B cell (primary cell): ENCODE measurements at regions of chr11 and their contacts with region 1.

Region 1: GRCh38 chr11:82867495-82868082 is 32.6 kb downstream of the PRCP start:
- DNase-seq: peak; percentile 87
- ATAC-seq: peak; percentile 54
- H3K4me3 ChIP-seq: peak overlapping the region in 2 of 5 experiments; percentile 22 to 33
- H3K4me3 Mint-ChIP-seq: peak overlapping the region; percentile 63
- H3K27ac ChIP-seq: no peak overlapping the region
- H3K27ac Mint-ChIP-seq: peak overlapping the region; percentile 28
- H3K4me1 ChIP-seq: peaks cover 6% of the 10 kb centered on the region in 2 donors
- H3K4me1 Mint-ChIP-seq: peaks cover 9% of the 10 kb centered on the region
- H3K27me3 ChIP-seq: no peaks in the 10 kb centered on the region
- H3K27me3 Mint-ChIP-seq: no peaks in the 10 kb centered on the region
- CTCF ChIP-seq: peak; percentile 92

Region 2: DNA sequence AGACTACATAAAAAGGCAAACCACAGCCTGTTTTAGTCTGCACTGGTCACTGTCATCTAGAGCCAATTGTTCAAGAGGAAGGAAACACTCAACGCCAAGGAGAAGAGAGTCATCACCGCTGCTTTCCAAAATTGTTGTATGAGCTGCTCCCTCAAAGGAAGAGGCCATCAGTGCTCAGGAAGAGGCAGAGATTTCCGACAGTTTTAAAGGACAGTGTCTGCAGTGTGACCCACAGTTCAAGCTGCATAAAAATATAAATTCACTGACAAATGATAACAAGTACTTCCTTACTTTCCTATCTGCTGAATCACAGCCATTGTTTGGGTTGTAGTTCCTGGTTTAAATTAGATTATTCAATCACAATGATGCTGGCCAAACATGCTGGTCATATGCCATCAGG is 16.3 kb after region 1 on chr11:
- CTCF ChIA-PET with region 1: interaction called, 27 read pairs
- POLR2A ChIA-PET with region 1: no interaction called
- intact Hi-C with region 1: no loop called
- DNase-seq: no peak
- ATAC-seq: no peak
- H3K4me3 ChIP-seq: no peak overlapping the region
- H3K4me3 Mint-ChIP-seq: no peak overlapping the region
- H3K27ac ChIP-seq: no peak overlapping the region
- H3K27ac Mint-ChIP-seq: no peak overlapping the region
- H3K4me1 ChIP-seq: peaks cover 8 to 10% of the 10 kb centered on the region in 2 donors
- H3K4me1 Mint-ChIP-seq: peaks cover 16% of the 10 kb centered on the region
- H3K27me3 ChIP-seq: no peaks in the 10 kb centered on the region
- H3K27me3 Mint-ChIP-seq: no peaks in the 10 kb centered on the region
- CTCF ChIP-seq: no peak

Region 3: DNA sequence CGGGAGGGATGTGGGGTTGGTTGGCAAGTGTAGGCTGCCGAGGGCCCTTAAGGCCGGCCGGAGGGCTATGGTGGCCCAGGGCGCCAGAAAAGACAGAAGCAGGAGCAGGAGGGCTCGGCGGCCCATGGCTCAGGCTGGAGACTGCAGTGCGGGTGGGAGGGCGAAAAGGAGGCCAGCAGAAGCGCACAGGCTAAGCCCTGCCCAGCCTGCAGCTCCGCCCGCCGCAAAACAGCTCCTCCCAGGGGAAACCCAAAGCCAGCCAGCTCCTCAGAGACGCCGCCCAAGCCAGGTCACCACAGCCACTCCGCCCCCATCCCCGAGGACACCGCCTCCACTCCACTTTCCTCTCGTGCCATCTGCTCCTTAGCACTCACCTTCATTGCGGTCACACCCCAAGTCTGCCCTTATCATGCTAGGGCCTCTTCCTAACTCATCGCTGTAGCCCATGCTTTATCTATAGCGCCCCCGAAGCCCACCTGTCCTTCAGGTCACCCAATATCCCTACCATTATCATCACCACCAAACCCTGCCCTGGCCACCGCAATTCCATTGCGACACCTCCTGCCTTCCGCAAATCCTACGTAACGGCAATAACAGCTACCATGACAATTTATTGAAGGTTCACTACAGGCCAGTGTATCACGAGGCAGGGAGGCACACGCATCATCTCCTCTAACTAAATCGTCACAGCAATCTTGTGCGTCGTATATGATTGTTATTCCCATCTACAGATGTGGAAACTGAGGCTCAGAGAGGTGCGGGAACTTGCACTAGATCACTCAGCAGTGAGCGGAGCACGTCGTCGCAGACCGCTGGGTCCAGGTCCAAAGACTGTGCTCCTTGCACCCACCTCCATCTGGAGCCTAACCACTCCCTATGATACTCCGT is 32.9 kb after region 1 on chr11 and contains the start of gene PRCP:
- CTCF ChIA-PET with region 1: interaction called, 68 read pairs
- POLR2A ChIA-PET with region 1: interaction called, 4 read pairs
- intact Hi-C with region 1: loop called (anchors 1 kb)
- DNase-seq: peak; percentile 94
- ATAC-seq: peak; percentile 73
- H3K4me3 ChIP-seq: peak within 1 kb of the TSS; percentile 54 to 97 (median 93)
- H3K4me3 Mint-ChIP-seq: peak within 1 kb of the TSS; percentile 100
- H3K27ac ChIP-seq: peak within 1 kb of the TSS; percentile 94 to 95
- H3K27ac Mint-ChIP-seq: peak within 1 kb of the TSS; percentile 99
- H3K4me1 ChIP-seq: peaks cover 46 to 50% of the 10 kb centered on the region in 2 donors
- H3K4me1 Mint-ChIP-seq: peaks cover 52% of the 10 kb centered on the region
- H3K27me3 ChIP-seq: no peaks in the 10 kb centered on the region
- H3K27me3 Mint-ChIP-seq: no peaks in the 10 kb centered on the region
- CTCF ChIP-seq: no peak
- total RNA-seq, gene PRCP: 37.7 and 45.2 TPM in 2 replicates

Region 4: GRCh38 chr11:82996966-82997606 is 129.5 kb after region 1 on chr11:
- CTCF ChIA-PET with region 1: interaction called, 11 read pairs
- POLR2A ChIA-PET with region 1: no interaction called
- intact Hi-C with region 1: no loop called
- DNase-seq: peak; percentile 41
- ATAC-seq: peak; percentile 81
- H3K4me3 ChIP-seq: no peak overlapping the region
- H3K4me3 Mint-ChIP-seq: peak overlapping the region; percentile 81
- H3K27ac ChIP-seq: peak overlapping the region in 1 of 2 donors; percentile 28
- H3K27ac Mint-ChIP-seq: peak overlapping the region; percentile 85
- H3K4me1 ChIP-seq: peaks cover 57 to 66% of the 10 kb centered on the region in 2 donors
- H3K4me1 Mint-ChIP-seq: peaks cover 89% of the 10 kb centered on the region
- H3K27me3 ChIP-seq: no peaks in the 10 kb centered on the region
- H3K27me3 Mint-ChIP-seq: no peaks in the 10 kb centered on the region
- CTCF ChIP-seq: no peak

Region 5: DNA sequence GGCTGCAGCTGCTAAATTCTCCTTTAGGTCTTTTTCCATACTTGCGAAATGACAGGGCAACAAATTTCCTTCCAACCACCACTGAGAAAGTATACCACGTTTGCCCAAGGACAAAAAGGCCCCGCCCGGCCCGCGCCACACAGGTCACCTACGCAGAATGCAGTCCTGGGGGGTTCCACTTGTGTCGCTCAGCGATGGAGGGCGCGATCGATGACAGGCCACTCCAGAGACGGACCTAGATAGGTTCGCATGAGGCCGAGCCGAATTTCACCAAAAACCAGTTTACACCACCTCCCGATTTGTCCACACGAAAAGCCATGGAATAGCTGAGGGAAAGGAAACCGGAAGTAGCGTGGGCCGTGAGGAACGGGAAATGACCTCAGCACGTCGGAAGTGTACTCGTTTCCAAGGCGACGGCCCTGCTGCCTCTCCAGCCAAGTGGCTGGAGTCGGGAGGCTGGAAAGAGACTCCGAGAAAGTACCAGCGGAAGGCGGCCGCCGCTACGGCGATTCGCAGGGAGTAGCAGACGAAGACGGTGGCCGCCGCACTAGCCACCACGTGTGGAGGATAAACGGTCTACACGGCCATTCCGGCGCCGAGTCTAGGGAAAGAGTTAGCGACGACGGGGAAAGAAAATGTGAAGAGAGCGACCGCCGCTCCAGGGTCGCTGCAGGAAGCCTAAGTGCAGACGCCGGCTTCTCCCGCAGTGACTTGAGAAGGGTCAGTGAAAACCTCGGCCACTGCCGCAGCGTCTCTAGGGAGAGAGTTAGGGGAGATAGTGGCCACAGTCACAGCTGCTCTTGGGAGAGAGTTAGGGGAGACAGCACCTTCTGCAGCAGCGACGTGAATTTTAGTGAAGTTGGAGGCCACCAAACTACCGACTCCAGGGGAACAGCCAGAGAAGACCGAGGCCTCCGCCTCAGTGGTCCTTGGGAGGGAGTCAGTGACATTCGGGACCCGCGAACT is 326.0 kb after region 1 on chr11 and contains the start of gene ANKRD42:
- CTCF ChIA-PET with region 1: interaction called, 7 read pairs
- POLR2A ChIA-PET with region 1: no interaction called
- intact Hi-C with region 1: loop called (anchors 1 kb)
- DNase-seq: peak; percentile 95
- ATAC-seq: peak; percentile 72
- H3K4me3 ChIP-seq: peak within 1 kb of the TSS; percentile 58 to 99 (median 96)
- H3K4me3 Mint-ChIP-seq: peak within 1 kb of the TSS; percentile 98
- H3K27ac ChIP-seq: peak within 1 kb of the TSS; percentile 93 to 96
- H3K27ac Mint-ChIP-seq: peak within 1 kb of the TSS; percentile 97
- H3K4me1 ChIP-seq: peaks cover 22 to 29% of the 10 kb centered on the region in 2 donors
- H3K4me1 Mint-ChIP-seq: peaks cover 49% of the 10 kb centered on the region
- H3K27me3 ChIP-seq: no peaks in the 10 kb centered on the region
- H3K27me3 Mint-ChIP-seq: no peaks in the 10 kb centered on the region
- CTCF ChIP-seq: no peak
- total RNA-seq, gene ANKRD42: 13.3 and 14.5 TPM in 2 replicates

Region 6: DNA sequence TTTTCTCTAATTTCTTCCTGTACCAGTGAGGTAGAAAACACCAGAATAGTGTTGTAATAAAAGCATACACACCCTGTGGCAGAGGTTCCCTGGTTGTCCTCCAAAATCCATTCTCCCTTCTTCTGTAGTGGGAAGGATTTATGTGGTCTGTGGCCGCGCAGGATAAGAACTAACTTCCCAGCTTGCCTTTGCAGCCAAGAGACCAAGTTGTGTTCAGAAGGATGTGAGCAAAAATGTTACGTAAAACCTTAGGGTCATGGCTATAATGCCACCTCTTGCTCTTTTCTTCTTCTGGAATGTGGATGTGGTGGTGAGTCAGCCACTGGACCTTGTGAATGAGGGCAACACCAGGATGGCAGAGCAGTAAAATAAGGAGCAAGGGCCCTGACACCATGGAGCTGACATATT is 390.2 kb after region 1 on chr11:
- CTCF ChIA-PET with region 1: interaction called, 16 read pairs
- POLR2A ChIA-PET with region 1: no interaction called
- intact Hi-C with region 1: no loop called
- DNase-seq: no peak
- ATAC-seq: no peak
- H3K4me3 ChIP-seq: no peak overlapping the region
- H3K4me3 Mint-ChIP-seq: no peak overlapping the region
- H3K27ac ChIP-seq: no peak overlapping the region
- H3K27ac Mint-ChIP-seq: no peak overlapping the region
- H3K4me1 ChIP-seq: no peaks in the 10 kb centered on the region
- H3K4me1 Mint-ChIP-seq: no peaks in the 10 kb centered on the region
- H3K27me3 ChIP-seq: no peaks in the 10 kb centered on the region
- H3K27me3 Mint-ChIP-seq: no peaks in the 10 kb centered on the region
- CTCF ChIP-seq: no peak

Region 7: DNA sequence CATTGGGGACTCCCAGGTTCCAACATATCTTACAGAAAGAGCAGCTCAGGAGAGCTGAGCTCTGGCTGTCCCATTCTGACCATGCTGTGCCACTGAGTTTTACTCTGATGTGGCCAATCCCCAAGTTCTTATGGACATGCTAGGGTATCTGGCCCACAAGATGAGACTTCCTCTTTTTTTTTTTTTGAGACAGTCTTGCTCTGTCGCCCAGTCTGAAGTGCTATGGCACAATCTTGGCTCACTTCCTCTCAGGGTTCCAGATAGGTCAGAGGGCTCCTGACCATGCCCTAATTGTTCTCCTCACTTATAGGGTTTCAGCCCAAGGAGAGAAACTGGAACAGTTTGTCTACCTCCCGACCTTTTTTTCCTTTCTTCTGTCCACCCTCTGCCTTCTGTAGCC is 570.8 kb after region 1 on chr11:
- CTCF ChIA-PET with region 1: no interaction called
- POLR2A ChIA-PET with region 1: no interaction called
- intact Hi-C with region 1: no loop called
- DNase-seq: peak; percentile 16
- ATAC-seq: no peak
- H3K4me3 ChIP-seq: no peak overlapping the region
- H3K4me3 Mint-ChIP-seq: no peak overlapping the region
- H3K27ac ChIP-seq: no peak overlapping the region
- H3K27ac Mint-ChIP-seq: no peak overlapping the region
- H3K4me1 ChIP-seq: peaks cover 0 to 5% of the 10 kb centered on the region in 2 donors
- H3K4me1 Mint-ChIP-seq: no peaks in the 10 kb centered on the region
- H3K27me3 ChIP-seq: no peaks in the 10 kb centered on the region
- H3K27me3 Mint-ChIP-seq: peaks cover 5% of the 10 kb centered on the region
- CTCF ChIP-seq: no peak

Region 8: GRCh38 chr11:83819933-83820549 is 952.5 kb after region 1 on chr11:
- CTCF ChIA-PET with region 1: interaction called, 9 read pairs
- POLR2A ChIA-PET with region 1: no interaction called
- intact Hi-C with region 1: loop called (anchors 2 kb)
- DNase-seq: peak; percentile 36
- ATAC-seq: no peak
- H3K4me3 ChIP-seq: no peak overlapping the region
- H3K4me3 Mint-ChIP-seq: no peak overlapping the region
- H3K27ac ChIP-seq: no peak overlapping the region
- H3K27ac Mint-ChIP-seq: no peak overlapping the region
- H3K4me1 ChIP-seq: no peaks in the 10 kb centered on the region
- H3K4me1 Mint-ChIP-seq: no peaks in the 10 kb centered on the region
- H3K27me3 ChIP-seq: no peaks in the 10 kb centered on the region
- H3K27me3 Mint-ChIP-seq: peaks cover 6% of the 10 kb centered on the region
- CTCF ChIP-seq: peak; percentile 67